Heart right ventricle (tissue), 16 donors: ENCODE measurements at regions of chr21 and their contacts with region 1.

Region 1: GRCh38 chr21:28745131-28746016 is 247.3 kb downstream of the LTN1 start:
- DNase-seq: peak; percentile 47 to 81
- ATAC-seq: peak; percentile 83 to 96 (median 91)
- H3K4me3 ChIP-seq: peak overlapping the region in 9 of 10 donors; percentile 18 to 59 (median 54)
- H3K27ac ChIP-seq: peak overlapping the region; percentile 18 to 93 (median 84)
- H3K4me1 ChIP-seq: peaks cover 0 to 32% (median 13%) of the 10 kb centered on the region in 9 donors
- H3K27me3 ChIP-seq: no peaks in the 10 kb centered on the region
- CTCF ChIP-seq: peak; percentile 89 to 96 (median 94)

Region 2: GRCh38 chr21:26850108-26850643 is 1895.2 kb before region 1 on chr21:
- intact Hi-C with region 1: loop called in 9 of 10 experiments (anchors 1 to 5 kb)
- DNase-seq: no peak
- ATAC-seq: no peak
- H3K4me3 ChIP-seq: peak overlapping the region in 6 of 10 donors; percentile 4 to 18 (median 8)
- H3K27ac ChIP-seq: no peak overlapping the region
- H3K4me1 ChIP-seq: peaks cover 0 to 33% (median 21%) of the 10 kb centered on the region in 9 donors
- H3K27me3 ChIP-seq: peaks cover 0 to 31% (median 0%) of the 10 kb centered on the region in 7 donors
- CTCF ChIP-seq: peak; percentile 56 to 84 (median 71)

Region 3: GRCh38 chr21:27700974-27701614 is 1044.3 kb before region 1 on chr21:
- intact Hi-C with region 1: loop called in 8 of 10 experiments (anchors 1 to 10 kb)
- DNase-seq: peak; percentile 77 to 88
- ATAC-seq: peak; percentile 76 to 95 (median 91)
- H3K4me3 ChIP-seq: peak overlapping the region in 1 of 10 donors; percentile 7
- H3K27ac ChIP-seq: no peak overlapping the region
- H3K4me1 ChIP-seq: peaks cover 0 to 21% (median 0%) of the 10 kb centered on the region in 9 donors
- H3K27me3 ChIP-seq: no peaks in the 10 kb centered on the region
- CTCF ChIP-seq: peak; percentile 76 to 95 (median 89)

Region 4: GRCh38 chr21:28063241-28064216 is 681.8 kb before region 1 on chr21:
- intact Hi-C with region 1: loop called in 4 of 10 experiments (anchors 10 kb)
- DNase-seq: no peak
- ATAC-seq: no peak
- H3K4me3 ChIP-seq: no peak overlapping the region
- H3K27ac ChIP-seq: no peak overlapping the region
- H3K4me1 ChIP-seq: peaks cover 0 to 24% (median 15%) of the 10 kb centered on the region in 9 donors
- H3K27me3 ChIP-seq: no peaks in the 10 kb centered on the region
- CTCF ChIP-seq: no peak

Region 5: GRCh38 chr21:28336314-28336713 is 409.1 kb before region 1 on chr21:
- intact Hi-C with region 1: loop called in 7 of 10 experiments (anchors 2 to 10 kb)
- DNase-seq: peak in 1 of 2 donors; percentile 8
- ATAC-seq: peak in 5 of 8 donors; percentile 34 to 59 (median 41)
- H3K4me3 ChIP-seq: no peak overlapping the region
- H3K27ac ChIP-seq: peak overlapping the region in 3 of 10 donors; percentile 7 to 64 (median 36)
- H3K4me1 ChIP-seq: peaks cover 0 to 41% (median 26%) of the 10 kb centered on the region in 9 donors
- H3K27me3 ChIP-seq: no peaks in the 10 kb centered on the region
- CTCF ChIP-seq: peak; percentile 12 to 78 (median 51)

Region 6: DNA sequence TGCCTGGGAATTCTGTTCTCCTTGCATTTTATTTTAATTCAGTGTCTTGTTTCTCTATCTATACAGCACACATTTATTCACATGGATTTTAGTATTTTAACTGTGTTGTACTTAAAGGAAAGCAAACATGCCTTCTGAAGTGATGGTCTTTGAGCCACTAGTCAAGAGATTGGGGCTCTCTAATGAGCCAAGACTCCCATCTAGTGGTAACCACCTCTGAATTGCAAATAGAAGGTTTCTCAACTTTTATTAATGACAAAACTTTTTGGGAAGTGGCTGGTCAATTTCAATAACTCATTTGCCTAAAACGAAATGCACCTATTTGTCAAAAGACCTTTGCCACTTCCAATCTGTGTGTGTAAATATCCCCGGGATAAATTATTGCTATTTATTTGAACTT is 47.7 kb after region 1 on chr21:
- intact Hi-C with region 1: loop called in 3 of 10 experiments (anchors 1 to 5 kb)
- DNase-seq: peak in 1 of 2 donors; percentile 28
- ATAC-seq: peak in 5 of 8 donors; percentile 58 to 72 (median 64)
- H3K4me3 ChIP-seq: no peak overlapping the region
- H3K27ac ChIP-seq: no peak overlapping the region
- H3K4me1 ChIP-seq: peaks cover 0 to 19% (median 4%) of the 10 kb centered on the region in 9 donors
- H3K27me3 ChIP-seq: no peaks in the 10 kb centered on the region
- CTCF ChIP-seq: peak; percentile 11 to 69 (median 61)